Activated CD4-positive, alpha-beta memory T cell treated with anti-CD3 and anti-CD28 coated beads, Interleukin-2, amount 10 ng/mL, durations not matched to agents 7 days and 5 days (primary cell): ENCODE measurements at regions of chr9 and their contacts with region 1.

Region 1: GRCh38 chr9:72280913-72281500 is 84.0 kb downstream of the ZFAND5 start:
- DNase-seq: peak; percentile 75
- H3K4me3 Mint-ChIP-seq: no peak overlapping the region
- H3K27ac Mint-ChIP-seq: no peak overlapping the region
- H3K4me1 Mint-ChIP-seq: no peaks in the 10 kb centered on the region
- H3K27me3 Mint-ChIP-seq: peaks cover 1% of the 10 kb centered on the region

Region 2: DNA sequence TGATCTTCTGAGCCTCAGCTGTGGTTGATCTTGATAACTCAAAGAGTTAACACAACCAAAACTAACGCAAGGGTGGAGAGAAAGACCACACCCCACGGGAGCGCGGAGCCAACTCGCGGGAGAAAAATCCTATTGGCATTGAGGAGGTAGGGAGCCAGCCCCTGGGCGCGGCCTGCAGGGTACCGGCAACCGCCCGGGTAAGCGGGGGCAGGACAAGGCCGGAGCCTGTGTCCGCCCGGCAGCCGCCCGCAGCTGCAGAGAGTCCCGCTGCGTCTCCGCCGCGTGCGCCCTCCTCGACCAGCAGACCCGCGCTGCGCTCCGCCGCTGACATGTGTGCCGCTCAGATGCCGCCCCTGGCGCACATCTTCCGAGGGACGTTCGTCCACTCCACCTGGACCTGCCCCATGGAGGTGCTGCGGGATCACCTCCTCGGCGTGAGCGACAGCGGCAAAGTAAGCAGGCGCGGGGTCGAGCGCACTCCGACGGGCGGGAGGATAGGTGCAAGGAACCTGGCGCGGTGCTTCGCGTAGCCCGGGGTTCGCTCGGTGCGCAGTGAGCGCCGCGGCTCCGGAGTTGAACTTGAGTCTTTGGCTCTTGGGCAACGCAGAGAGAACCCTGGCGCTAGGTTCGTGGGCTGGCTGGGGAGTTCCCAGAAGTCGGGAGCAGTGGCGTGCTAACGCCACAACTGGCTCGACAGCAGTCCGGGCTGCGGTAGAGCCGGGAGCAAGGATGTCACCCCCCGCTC is 131.6 kb before region 1 on chr9 and contains the start of gene GDA:
- CTCF ChIA-PET with region 1: no interaction called
- POLR2A ChIA-PET with region 1: no interaction called
- DNase-seq: no peak
- H3K4me3 Mint-ChIP-seq: no peak within 1 kb of the TSS
- H3K27ac Mint-ChIP-seq: no peak within 1 kb of the TSS
- H3K4me1 Mint-ChIP-seq: no peaks in the 10 kb centered on the region
- H3K27me3 Mint-ChIP-seq: peaks cover 30% of the 10 kb centered on the region
- total RNA-seq, gene GDA: not detected

Region 3: DNA sequence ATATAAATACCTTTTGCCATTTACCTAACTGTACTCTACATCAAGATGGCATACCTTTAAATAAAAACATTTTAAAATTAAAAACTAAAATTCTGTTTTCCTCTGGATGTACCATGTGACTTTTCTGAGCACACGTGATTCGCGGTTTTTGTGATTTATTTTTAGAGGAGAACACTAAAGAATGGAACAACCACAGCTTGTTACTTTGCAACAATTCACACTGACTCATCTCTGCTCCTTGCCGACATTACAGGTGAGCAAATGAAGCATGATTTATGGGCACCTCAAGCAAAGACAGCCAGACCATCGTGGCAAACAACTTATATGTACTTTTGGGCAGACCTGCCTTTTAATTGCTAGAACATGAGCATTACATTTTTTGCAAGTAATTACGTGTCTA is 70.5 kb before region 1 on chr9:
- CTCF ChIA-PET with region 1: no interaction called
- POLR2A ChIA-PET with region 1: no interaction called
- DNase-seq: no peak
- H3K4me3 Mint-ChIP-seq: no peak overlapping the region
- H3K27ac Mint-ChIP-seq: no peak overlapping the region
- H3K4me1 Mint-ChIP-seq: no peaks in the 10 kb centered on the region
- H3K27me3 Mint-ChIP-seq: peaks cover 18% of the 10 kb centered on the region

Region 4: GRCh38 chr9:72305102-72305546 is 24.1 kb after region 1 on chr9:
- CTCF ChIA-PET with region 1: interaction called, 12 read pairs
- POLR2A ChIA-PET with region 1: no interaction called
- DNase-seq: peak; percentile 55
- H3K4me3 Mint-ChIP-seq: peak overlapping the region; percentile 54
- H3K27ac Mint-ChIP-seq: peak overlapping the region; percentile 84
- H3K4me1 Mint-ChIP-seq: peaks cover 47% of the 10 kb centered on the region
- H3K27me3 Mint-ChIP-seq: peaks cover 3% of the 10 kb centered on the region

Region 5: GRCh38 chr9:72592502-72593403 is 311.7 kb after region 1 on chr9:
- CTCF ChIA-PET with region 1: interaction called, 45 read pairs
- POLR2A ChIA-PET with region 1: no interaction called
- DNase-seq: peak; percentile 42
- H3K4me3 Mint-ChIP-seq: no peak overlapping the region
- H3K27ac Mint-ChIP-seq: no peak overlapping the region
- H3K4me1 Mint-ChIP-seq: peaks cover 65% of the 10 kb centered on the region
- H3K27me3 Mint-ChIP-seq: peaks cover 8% of the 10 kb centered on the region

Region 6: DNA sequence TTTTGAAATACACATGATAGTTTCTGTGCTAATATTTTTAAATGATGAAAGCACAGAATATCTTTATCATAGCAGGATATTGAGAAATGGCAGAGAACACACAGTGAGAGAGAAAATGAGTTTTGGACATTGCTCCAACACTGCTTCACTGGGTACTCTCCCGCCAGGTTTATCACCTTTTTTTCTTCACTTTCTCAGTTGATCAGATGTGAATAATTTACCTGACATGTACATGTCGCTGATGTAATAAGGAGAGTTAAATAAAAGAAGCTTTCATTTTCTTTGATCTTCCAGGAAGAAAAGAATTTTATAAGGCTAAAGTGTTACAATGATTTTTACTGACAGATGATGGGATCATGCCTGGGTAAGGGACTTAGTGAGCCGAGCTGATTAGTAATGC is 537.4 kb after region 1 on chr9:
- CTCF ChIA-PET with region 1: interaction called, 46 read pairs
- POLR2A ChIA-PET with region 1: no interaction called
- DNase-seq: no peak
- H3K4me3 Mint-ChIP-seq: no peak overlapping the region
- H3K27ac Mint-ChIP-seq: no peak overlapping the region
- H3K4me1 Mint-ChIP-seq: no peaks in the 10 kb centered on the region
- H3K27me3 Mint-ChIP-seq: peaks cover 14% of the 10 kb centered on the region